Activated naive CD4-positive, alpha-beta T cell treated with anti-CD3 and anti-CD28 coated beads for 36 hours (primary cell): ENCODE measurements at regions of chr3 and their contacts with region 1.

Region 1: GRCh38 chr3:13657660-13658435 is 108.9 kb downstream of the FBLN2 start:
- DNase-seq: peak; percentile 71
- H3K4me3 Mint-ChIP-seq: no peak overlapping the region
- H3K27ac Mint-ChIP-seq: no peak overlapping the region
- H3K4me1 Mint-ChIP-seq: peaks cover 20% of the 10 kb centered on the region
- H3K27me3 Mint-ChIP-seq: peaks cover 6% of the 10 kb centered on the region

Region 2: GRCh38 chr3:13495921-13496723 is 161.7 kb before region 1 on chr3:
- CTCF ChIA-PET with region 1: interaction called, 344 read pairs
- intact Hi-C with region 1: no loop called
- DNase-seq: peak; percentile 83
- H3K4me3 Mint-ChIP-seq: no peak overlapping the region
- H3K27ac Mint-ChIP-seq: no peak overlapping the region
- H3K4me1 Mint-ChIP-seq: no peaks in the 10 kb centered on the region
- H3K27me3 Mint-ChIP-seq: no peaks in the 10 kb centered on the region

Region 3: GRCh38 chr3:13673209-13673608 is 15.4 kb after region 1 on chr3:
- CTCF ChIA-PET with region 1: interaction called, 52 read pairs
- intact Hi-C with region 1: no loop called
- DNase-seq: no peak
- H3K4me3 Mint-ChIP-seq: no peak overlapping the region
- H3K27ac Mint-ChIP-seq: no peak overlapping the region
- H3K4me1 Mint-ChIP-seq: no peaks in the 10 kb centered on the region
- H3K27me3 Mint-ChIP-seq: peaks cover 3% of the 10 kb centered on the region

Region 4: GRCh38 chr3:13686367-13687160 is 28.7 kb after region 1 on chr3:
- CTCF ChIA-PET with region 1: interaction called, 10 read pairs
- intact Hi-C with region 1: no loop called
- DNase-seq: no peak
- H3K4me3 Mint-ChIP-seq: no peak overlapping the region
- H3K27ac Mint-ChIP-seq: no peak overlapping the region
- H3K4me1 Mint-ChIP-seq: no peaks in the 10 kb centered on the region
- H3K27me3 Mint-ChIP-seq: no peaks in the 10 kb centered on the region

Region 5: DNA sequence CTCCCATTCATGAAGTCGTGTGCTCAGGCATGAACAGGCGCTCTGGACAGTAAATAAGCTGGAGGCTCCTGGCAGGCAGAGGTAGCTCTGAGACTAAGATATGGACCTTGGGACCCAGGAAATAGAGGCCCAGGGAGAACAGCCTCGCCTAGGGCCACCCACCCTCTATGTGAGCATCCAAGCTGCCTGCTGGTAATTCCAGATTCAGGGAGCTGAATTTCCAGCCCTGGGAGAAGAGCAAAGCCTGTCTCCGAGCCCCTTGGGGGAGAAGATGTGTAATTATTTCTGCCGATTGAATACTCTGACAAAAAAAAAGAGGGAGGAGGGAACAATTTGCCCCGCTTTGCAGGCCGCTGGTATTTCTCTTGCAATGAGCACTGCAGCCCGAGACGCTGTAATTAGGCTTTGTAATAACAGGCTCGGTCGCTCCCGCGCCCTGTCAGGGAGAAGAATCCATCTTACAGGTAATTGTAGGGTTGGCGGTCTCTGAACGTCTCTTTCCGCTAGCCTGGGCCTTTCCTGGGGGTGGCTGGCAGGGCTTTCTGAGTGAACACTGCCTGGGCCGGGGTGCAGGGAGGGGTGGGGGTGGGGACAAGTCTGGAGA is 90.5 kb after region 1 on chr3:
- CTCF ChIA-PET with region 1: no interaction called
- intact Hi-C with region 1: no loop called
- DNase-seq: no peak
- H3K4me3 Mint-ChIP-seq: no peak overlapping the region
- H3K27ac Mint-ChIP-seq: no peak overlapping the region
- H3K4me1 Mint-ChIP-seq: no peaks in the 10 kb centered on the region
- H3K27me3 Mint-ChIP-seq: peaks cover 10% of the 10 kb centered on the region

Region 6: GRCh38 chr3:13879655-13880204 is 221.9 kb after region 1 on chr3 and contains the start of gene WNT7A:
- CTCF ChIA-PET with region 1: interaction called, 459 read pairs
- intact Hi-C with region 1: loop called (anchors 1 kb)
- DNase-seq: peak; percentile 33
- H3K4me3 Mint-ChIP-seq: peak within 1 kb of the TSS; percentile 63
- H3K27ac Mint-ChIP-seq: no peak within 1 kb of the TSS
- H3K4me1 Mint-ChIP-seq: no peaks in the 10 kb centered on the region
- H3K27me3 Mint-ChIP-seq: peaks cover 10% of the 10 kb centered on the region
- total RNA-seq, gene WNT7A: 0.07 to 0.10 TPM

Region 7: DNA sequence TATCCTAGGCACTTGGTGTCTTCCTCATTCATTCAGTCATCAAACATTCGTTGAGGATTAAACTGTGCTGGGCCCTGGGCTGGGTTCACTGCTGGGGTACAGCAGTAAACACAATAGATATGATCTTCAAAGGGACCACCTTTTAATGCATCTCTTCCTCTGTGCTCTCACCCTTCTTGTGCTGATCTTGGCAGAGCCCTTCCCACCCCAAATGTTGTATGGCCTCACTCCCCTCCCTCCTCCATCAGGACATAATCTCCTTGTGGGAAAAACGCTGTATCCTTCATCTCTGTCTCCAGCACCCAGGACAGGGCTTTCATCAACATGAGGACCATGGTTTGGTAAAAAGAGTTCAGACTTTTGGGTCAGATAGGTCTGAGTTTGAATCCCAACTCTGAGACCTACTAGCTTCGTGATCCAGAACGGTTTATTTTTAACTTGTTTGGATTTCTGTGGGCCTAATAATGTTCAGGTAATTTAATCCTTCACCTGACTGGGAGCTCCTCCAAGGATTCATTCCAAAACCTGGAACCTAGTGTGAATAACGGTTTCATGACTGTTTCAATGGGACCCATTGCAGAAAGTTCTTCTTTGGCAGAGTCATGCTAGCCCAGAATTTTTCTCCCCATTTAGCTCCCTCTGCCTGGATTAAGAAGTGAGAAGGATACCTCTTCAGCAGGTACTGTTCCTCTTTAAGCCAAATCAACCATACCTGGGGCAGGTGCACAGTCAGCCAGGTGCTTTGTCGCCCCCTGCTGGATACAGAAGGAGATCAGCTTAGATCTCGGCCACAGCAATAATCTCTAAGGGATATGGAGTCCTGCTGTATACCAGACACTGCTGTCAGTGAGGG is 227.2 kb after region 1 on chr3:
- CTCF ChIA-PET with region 1: interaction called, 459 read pairs
- intact Hi-C with region 1: loop called (anchors 1 kb)
- DNase-seq: peak; percentile 84
- H3K4me3 Mint-ChIP-seq: no peak overlapping the region
- H3K27ac Mint-ChIP-seq: no peak overlapping the region
- H3K4me1 Mint-ChIP-seq: no peaks in the 10 kb centered on the region
- H3K27me3 Mint-ChIP-seq: peaks cover 7% of the 10 kb centered on the region